Activated naive CD4-positive, alpha-beta T cell treated with anti-CD3 and anti-CD28 coated beads, Interleukin-2, amount 10 ng/mL, durations not matched to agents 7 days and 5 days (primary cell): ENCODE measurements at regions of chr5 and their contacts with region 1.

Region 1: DNA sequence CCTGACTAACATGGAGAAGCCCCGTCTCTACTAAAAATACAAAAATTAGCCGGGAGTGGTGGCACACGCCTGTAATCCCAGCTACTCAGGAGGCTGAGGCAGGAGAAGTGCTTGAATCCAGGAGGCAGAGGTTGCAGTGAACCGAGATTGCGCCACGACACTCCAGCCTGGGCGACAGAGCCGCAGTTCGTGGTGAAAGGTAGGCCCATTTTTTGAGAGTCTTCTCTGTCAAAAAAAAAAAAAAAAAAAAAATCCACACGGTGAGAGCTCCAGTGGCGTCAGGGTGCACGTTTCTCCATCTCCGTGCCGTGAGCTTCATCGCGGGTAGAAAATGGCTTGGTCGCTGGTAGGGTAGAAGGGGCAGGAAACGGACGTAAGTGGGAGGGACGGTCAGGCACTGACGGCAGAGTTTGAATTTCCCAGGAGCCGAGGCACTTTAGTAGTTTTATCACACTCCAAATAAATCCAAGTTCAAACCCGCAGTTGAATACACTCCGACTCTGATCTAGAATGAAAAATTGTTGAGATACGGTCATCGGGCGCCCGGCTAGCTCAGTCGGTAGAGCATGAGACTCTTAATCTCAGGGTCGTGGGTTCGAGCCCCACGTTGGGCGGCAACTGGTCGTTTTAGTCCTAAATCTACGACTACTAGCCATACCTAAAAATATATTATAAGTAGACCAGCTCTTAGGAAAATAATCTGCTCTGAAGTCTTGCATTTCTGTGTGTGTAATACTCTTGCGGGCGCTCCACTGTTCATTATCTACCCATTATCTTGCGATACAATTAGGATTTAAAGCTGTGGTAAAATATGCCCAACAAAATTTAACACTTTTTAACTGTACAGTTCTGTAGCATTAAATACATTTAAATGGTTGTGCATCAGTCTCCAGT is 2.5 kb upstream of the TRIM7 start:
- DNase-seq: peak; percentile 77
- H3K4me3 Mint-ChIP-seq: peak overlapping the region; percentile 79
- H3K27ac Mint-ChIP-seq: peak overlapping the region; percentile 93
- H3K4me1 Mint-ChIP-seq: peaks cover 42% of the 10 kb centered on the region
- H3K27me3 Mint-ChIP-seq: peaks cover 50% of the 10 kb centered on the region

Region 2: GRCh38 chr5:181114844-181115778 is 92.3 kb before region 1 on chr5:
- CTCF ChIA-PET with region 1: no interaction called
- DNase-seq: no peak
- H3K4me3 Mint-ChIP-seq: no peak overlapping the region
- H3K27ac Mint-ChIP-seq: no peak overlapping the region
- H3K4me1 Mint-ChIP-seq: peaks cover 5% of the 10 kb centered on the region
- H3K27me3 Mint-ChIP-seq: peaks cover 62% of the 10 kb centered on the region

Region 3: DNA sequence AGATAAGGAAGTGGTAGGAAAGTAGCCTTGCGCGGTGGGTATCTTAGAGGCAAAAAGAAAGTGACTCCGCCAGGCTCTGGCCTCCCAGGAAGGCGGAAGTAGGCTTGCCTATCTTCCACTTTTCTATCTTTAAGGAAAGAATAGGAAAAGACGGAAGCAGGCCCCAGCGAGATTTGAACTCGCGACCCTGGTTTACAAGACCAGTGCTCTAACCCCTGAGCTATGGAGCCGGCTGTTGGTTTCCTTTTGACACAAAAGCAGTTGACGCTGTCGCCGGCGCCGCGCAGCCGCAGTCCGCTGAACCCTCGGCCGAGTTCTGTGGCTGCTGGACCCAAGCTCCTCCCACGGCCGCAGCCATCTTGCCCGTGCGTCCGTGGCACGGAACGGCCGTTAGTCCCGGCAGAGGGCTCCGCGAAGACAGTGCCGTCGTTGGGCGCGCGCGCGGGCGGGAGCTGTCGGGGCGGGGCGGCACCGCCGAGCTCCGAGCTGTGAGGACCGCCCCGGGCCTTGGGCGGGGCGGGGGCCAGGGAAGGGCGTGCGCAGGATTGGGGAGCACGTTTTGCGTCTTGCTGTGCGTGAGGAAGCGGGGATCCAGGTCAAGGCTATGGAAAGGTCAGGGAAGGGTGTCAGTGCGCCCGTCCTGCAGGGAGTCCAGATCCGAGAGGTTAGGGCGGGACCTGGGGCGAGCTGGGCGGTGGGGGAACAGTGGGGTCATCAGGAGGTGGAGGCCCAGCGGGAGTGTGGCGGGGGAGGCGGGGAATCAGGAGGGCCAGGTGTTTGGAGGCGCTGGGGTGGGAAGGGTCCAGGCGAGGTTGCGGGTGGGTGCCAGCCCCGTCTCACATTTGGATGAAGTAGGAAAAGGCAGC is 15.7 kb before region 1 on chr5:
- CTCF ChIA-PET with region 1: interaction called, 22 read pairs
- DNase-seq: peak; percentile 95
- H3K4me3 Mint-ChIP-seq: peak overlapping the region; percentile 86
- H3K27ac Mint-ChIP-seq: peak overlapping the region; percentile 95
- H3K4me1 Mint-ChIP-seq: peaks cover 29% of the 10 kb centered on the region
- H3K27me3 Mint-ChIP-seq: peaks cover 27% of the 10 kb centered on the region